ENCODE measurements at regions of chr1 and their contacts with region 1.

Region 1: DNA sequence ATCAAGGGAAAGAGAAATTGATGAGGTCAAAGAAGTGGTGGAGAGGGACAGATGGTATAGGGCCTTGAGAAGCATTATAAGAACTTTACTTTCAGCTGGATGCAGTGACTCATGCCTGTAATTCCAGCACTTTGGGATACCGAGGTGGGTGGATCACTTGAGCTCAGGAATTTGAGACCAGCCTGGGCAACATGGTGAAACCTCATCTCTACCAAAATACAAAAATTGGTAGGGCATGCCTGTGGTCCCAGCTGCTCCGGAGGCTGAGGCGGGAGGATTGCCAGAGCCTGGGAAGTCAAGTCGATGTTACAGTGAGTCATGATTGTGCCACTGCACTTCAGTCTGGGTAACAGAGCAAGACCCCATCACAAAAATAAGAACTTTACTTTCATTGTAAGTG is 5.7 kb downstream of the TMEM50A start:
- DNase-seq: no peak
- H3K4me3 Mint-ChIP-seq: no peak overlapping the region
- H3K27ac Mint-ChIP-seq: no peak overlapping the region
- H3K4me1 Mint-ChIP-seq: peaks cover 42% of the 10 kb centered on the region
- H3K27me3 Mint-ChIP-seq: no peaks in the 10 kb centered on the region

Region 2: GRCh38 chr1:25356848-25357247 is 13.0 kb after region 1 on chr1:
- CTCF ChIA-PET with region 1: interaction called, 5 read pairs
- POLR2A ChIA-PET with region 1: interaction called, 11 read pairs
- DNase-seq: no peak
- H3K4me3 Mint-ChIP-seq: peak overlapping the region; percentile 18
- H3K27ac Mint-ChIP-seq: peak overlapping the region; percentile 86
- H3K4me1 Mint-ChIP-seq: peaks cover 57% of the 10 kb centered on the region
- H3K27me3 Mint-ChIP-seq: no peaks in the 10 kb centered on the region

Region 3: GRCh38 chr1:25369241-25369640 is 25.4 kb after region 1 on chr1:
- CTCF ChIA-PET with region 1: no interaction called
- POLR2A ChIA-PET with region 1: no interaction called
- DNase-seq: no peak
- H3K4me3 Mint-ChIP-seq: no peak overlapping the region
- H3K27ac Mint-ChIP-seq: no peak overlapping the region
- H3K4me1 Mint-ChIP-seq: no peaks in the 10 kb centered on the region
- H3K27me3 Mint-ChIP-seq: no peaks in the 10 kb centered on the region